AG04450 (cell line): ENCODE measurements at regions of chr10 and their contacts with region 1.

Region 1: GRCh38 chr10:44981172-44982113 is 2.8 kb upstream of the DEPP1 start:
- DNase-seq: peak; percentile 58
- H3K4me3 ChIP-seq: no peak overlapping the region
- H3K27ac ChIP-seq: peak overlapping the region; percentile 98
- H3K27me3 ChIP-seq: no peaks in the 10 kb centered on the region
- CTCF ChIP-seq: no peak

Region 2: DNA sequence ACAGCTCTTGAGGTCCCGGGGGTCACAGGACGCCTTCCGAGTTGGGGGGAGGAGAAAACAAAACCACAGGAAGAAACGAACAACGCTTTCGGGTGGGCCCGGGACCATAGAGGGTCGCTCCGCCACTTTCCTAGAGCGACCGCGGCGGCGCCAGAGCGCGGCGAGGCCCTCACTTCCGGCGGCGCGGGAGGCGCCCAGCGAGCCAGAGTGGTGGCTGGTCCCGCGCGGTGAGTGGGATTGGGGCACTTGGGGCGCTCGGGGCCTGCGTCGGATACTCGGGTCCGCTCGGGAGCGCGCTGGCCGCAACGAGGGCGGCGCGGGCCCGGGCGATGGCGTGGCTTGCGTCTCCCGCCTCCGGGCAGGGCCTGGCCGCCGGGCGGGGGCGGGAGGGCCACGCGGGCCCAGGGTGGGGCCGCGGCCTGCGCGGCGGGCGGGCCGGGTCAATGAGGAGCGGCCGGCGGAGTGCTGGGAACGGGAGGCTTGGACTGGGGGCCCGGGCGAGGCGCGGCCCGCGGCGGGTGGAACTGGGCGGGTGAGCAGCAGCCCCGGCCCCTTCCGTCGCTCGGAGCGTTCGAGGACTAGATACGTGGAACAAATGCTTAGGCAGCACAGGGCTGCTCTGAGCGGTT is 19.4 kb after region 1 on chr10 and contains the start of gene ZNF22:
- CTCF ChIA-PET with region 1: interaction called, 3 read pairs
- POLR2A ChIA-PET with region 1: interaction called, 10 read pairs
- DNase-seq: no peak
- H3K4me3 ChIP-seq: peak within 1 kb of the TSS; percentile 57
- H3K27ac ChIP-seq: peak within 1 kb of the TSS; percentile 85
- H3K27me3 ChIP-seq: no peaks in the 10 kb centered on the region
- CTCF ChIP-seq: peak; percentile 18; the same call in 1 of the 2 replicates
- polyA plus RNA-seq, gene ZNF22: 17.4 and 23.4 TPM in 2 replicates

Region 3: DNA sequence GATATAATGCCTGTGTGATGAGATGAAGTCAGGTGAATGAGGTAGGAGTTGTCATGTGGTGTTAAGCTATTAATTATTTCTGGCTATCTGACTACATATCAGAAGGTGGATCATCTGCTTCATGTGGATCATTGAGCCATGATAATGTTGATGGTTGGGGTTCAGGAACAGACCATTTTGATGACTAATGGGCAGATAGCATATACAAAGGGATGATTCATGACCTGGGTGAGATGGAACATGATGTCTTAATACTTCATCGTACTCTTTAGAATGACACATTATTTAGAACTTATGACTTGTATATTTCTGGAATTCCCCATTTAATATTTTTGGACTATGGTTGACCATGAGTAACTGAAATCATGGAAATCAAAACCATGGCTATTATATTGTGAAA is 178.8 kb after region 1 on chr10:
- CTCF ChIA-PET with region 1: no interaction called
- POLR2A ChIA-PET with region 1: no interaction called
- DNase-seq: no peak
- H3K4me3 ChIP-seq: no peak overlapping the region
- H3K27ac ChIP-seq: no peak overlapping the region
- H3K27me3 ChIP-seq: no peaks in the 10 kb centered on the region
- CTCF ChIP-seq: no peak